Endothelial cell of umbilical vein (primary cell): ENCODE measurements at regions of chr2 and their contacts with region 1.

Region 1: GRCh38 chr2:54522624-54523281 is 66.6 kb downstream of the SPTBN1 start:
- DNase-seq: peak; percentile 44
- H3K4me3 ChIP-seq: no peak overlapping the region
- H3K27ac ChIP-seq: no peak overlapping the region
- H3K4me1 ChIP-seq: peaks cover 10% of the 10 kb centered on the region
- H3K27me3 ChIP-seq: no peaks in the 10 kb centered on the region
- CTCF ChIP-seq: peak; percentile 48 to 68
- POLR2A ChIP-seq: no peak

Region 2: GRCh38 chr2:53058526-53058925 is 1464.2 kb before region 1 on chr2:
- CTCF ChIA-PET with region 1: no interaction called
- POLR2A ChIA-PET with region 1: no interaction called
- dilution Hi-C with region 1: no loop called
- intact Hi-C with region 1: no loop called
- DNase-seq: no peak
- H3K4me3 ChIP-seq: no peak overlapping the region
- H3K27ac ChIP-seq: no peak overlapping the region
- H3K4me1 ChIP-seq: no peaks in the 10 kb centered on the region
- H3K27me3 ChIP-seq: no peaks in the 10 kb centered on the region
- CTCF ChIP-seq: no peak
- POLR2A ChIP-seq: no peak

Region 3: GRCh38 chr2:54657664-54658083 is 134.9 kb after region 1 on chr2:
- CTCF ChIA-PET with region 1: interaction called, 19 read pairs
- POLR2A ChIA-PET with region 1: no interaction called
- dilution Hi-C with region 1: no loop called
- intact Hi-C with region 1: loop called (anchors 5 kb)
- DNase-seq: peak; percentile 61
- H3K4me3 ChIP-seq: no peak overlapping the region
- H3K27ac ChIP-seq: no peak overlapping the region
- H3K4me1 ChIP-seq: no peaks in the 10 kb centered on the region
- H3K27me3 ChIP-seq: no peaks in the 10 kb centered on the region
- CTCF ChIP-seq: peak; percentile 42 to 58
- POLR2A ChIP-seq: no peak

Region 4: DNA sequence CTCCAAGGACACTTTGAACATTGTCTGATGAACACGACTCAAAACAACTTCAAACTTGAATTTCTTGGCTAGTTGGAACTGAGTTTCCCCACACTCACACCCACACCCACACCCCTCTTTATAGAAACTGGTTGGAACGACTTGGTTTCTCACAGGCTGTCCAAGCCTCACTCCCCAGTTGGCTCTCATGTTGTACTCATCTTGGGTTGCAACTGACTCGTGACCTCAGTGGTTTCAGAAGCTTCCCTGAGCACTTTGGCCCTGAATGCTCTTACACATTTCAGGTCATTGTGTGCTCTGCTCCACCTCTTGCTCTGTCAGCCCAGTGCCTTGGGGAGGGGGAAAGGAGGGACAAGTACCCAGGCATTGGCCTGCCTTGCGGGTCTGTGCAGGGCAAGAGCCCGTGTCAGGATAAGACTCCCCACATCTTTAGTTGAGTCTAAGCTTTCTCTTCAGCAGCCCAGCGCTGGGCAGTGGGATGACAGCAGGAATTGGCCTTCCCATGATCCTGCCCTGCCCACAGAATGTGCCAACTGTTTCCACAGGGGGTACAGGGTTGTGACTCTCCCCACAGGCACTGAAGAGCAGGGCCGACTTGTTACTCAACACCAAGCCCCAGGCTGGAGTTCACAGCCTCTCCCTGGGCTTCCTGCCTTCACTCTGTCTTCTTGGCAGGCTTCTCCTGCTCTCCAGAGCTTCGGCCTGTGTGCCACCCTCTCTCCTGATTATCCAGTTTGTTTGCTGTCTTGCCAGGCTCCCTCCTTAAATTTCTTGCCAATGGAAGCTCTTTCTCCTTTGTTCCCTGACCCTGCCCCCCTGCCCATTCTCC is 422.9 kb after region 1 on chr2:
- CTCF ChIA-PET with region 1: no interaction called
- POLR2A ChIA-PET with region 1: no interaction called
- dilution Hi-C with region 1: no loop called
- intact Hi-C with region 1: no loop called
- DNase-seq: no peak
- H3K4me3 ChIP-seq: no peak overlapping the region
- H3K27ac ChIP-seq: no peak overlapping the region
- H3K4me1 ChIP-seq: no peaks in the 10 kb centered on the region
- H3K27me3 ChIP-seq: peaks cover 4 to 7% of the 10 kb centered on the region in 2 experiments
- CTCF ChIP-seq: no peak
- POLR2A ChIP-seq: no peak

Region 5: GRCh38 chr2:55088400-55088799 is 565.6 kb after region 1 on chr2:
- CTCF ChIA-PET with region 1: no interaction called
- POLR2A ChIA-PET with region 1: no interaction called
- dilution Hi-C with region 1: no loop called
- intact Hi-C with region 1: no loop called
- DNase-seq: no peak
- H3K4me3 ChIP-seq: no peak overlapping the region
- H3K27ac ChIP-seq: no peak overlapping the region
- H3K4me1 ChIP-seq: peaks cover 33% of the 10 kb centered on the region
- H3K27me3 ChIP-seq: no peaks in the 10 kb centered on the region
- CTCF ChIP-seq: no peak
- POLR2A ChIP-seq: no peak